ENCODE measurements at regions of chr1 and their contacts with region 1.

Region 1: DNA sequence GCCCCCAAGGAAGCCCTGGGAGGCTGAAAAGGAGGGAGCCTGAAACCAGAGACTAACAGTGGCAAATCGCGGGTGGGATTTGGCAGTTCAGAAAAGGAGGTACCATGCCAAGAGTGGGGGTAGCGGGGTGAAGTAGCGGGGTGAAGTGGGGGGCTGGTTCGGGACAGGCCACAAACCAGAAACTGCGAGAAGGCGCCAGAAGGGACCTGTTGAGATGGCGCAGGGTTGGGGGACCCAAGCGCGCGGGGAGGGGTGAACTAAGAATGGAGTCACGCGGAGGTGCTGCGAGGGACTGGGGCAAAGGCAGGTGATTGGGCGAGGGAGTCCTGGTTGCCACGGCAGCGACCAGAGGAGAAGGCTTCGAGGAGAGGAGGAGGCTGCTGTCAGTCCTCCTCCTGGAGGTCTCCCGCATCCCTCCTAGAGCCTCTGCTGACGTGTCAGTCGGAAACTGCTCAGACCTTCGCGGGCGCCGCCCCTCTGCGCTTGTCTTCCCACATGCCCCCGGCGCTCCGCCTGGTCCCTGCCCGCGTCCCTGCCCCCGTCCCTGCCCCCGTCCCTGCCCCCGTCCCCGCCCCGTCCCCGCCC is 438 bp upstream of the MIA3 start:
- DNase-seq: peak; percentile 98
- ATAC-seq: peak; percentile 95
- H3K4me3 ChIP-seq: peak overlapping the region; percentile 42
- H3K27ac ChIP-seq: peak overlapping the region; percentile 65
- H3K4me1 ChIP-seq: peaks cover 7% of the 10 kb centered on the region
- H3K27me3 ChIP-seq: no peaks in the 10 kb centered on the region
- CTCF ChIP-seq: no peak
- POLR2A ChIP-seq: peak; percentile 64
- RAD21 ChIP-seq: no peak

Region 2: GRCh38 chr1:222521299-222522104 is 96.0 kb before region 1 on chr1:
- CTCF ChIA-PET with region 1: no interaction called
- POLR2A ChIA-PET with region 1: no interaction called
- dilution Hi-C with region 1: no loop called
- in situ Hi-C with region 1: no loop called
- intact Hi-C with region 1: no loop called
- DNase-seq: peak; percentile 44
- ATAC-seq: peak; percentile 35; the same call in 1 of the 2 replicates
- H3K4me3 ChIP-seq: no peak overlapping the region
- H3K27ac ChIP-seq: no peak overlapping the region
- H3K4me1 ChIP-seq: no peaks in the 10 kb centered on the region
- H3K27me3 ChIP-seq: peaks cover 5% of the 10 kb centered on the region
- CTCF ChIP-seq: no peak
- POLR2A ChIP-seq: no peak
- RAD21 ChIP-seq: no peak

Region 3: DNA sequence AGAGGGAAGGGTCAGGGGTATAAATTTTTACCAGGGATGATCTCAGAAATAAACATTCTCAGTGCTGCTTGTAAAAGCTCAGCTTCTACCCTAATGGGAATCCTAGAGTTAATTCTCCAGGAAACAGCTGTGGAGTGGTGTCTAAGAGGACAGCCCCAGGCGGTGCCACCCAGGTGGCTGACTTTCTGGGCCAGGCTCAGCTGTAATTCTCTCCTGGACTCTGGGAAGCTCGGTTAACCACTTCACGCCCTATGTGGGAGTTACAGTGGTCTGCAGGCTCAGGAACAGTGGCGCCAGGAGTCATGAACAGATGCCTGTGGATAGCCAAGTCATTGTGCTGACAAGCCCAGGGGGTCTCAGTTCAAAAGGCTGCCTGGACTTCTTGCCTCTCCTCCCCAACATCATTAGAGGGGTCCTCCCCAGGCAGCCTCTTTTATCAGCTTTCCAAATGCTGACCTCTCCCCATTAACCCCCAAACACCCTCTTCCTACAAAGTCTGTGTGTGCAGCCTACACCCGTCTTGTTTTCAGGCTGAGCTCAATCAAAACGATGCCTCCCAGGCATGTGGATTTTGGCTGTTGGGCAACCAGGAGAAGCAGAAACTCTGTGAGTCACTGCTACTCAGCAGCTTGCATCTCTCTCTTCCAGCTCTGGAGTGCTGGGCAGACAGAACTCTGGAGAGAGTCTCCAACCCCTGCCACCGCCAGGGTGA is 70.8 kb before region 1 on chr1:
- CTCF ChIA-PET with region 1: no interaction called
- POLR2A ChIA-PET with region 1: no interaction called
- dilution Hi-C with region 1: no loop called
- in situ Hi-C with region 1: no loop called
- intact Hi-C with region 1: loop called (anchors 2 kb)
- DNase-seq: peak; percentile 83
- ATAC-seq: peak; percentile 95
- H3K4me3 ChIP-seq: no peak overlapping the region
- H3K27ac ChIP-seq: peak overlapping the region; percentile 27; the same call in 1 of the 2 replicates
- H3K4me1 ChIP-seq: peaks cover 5% of the 10 kb centered on the region; the same call in 1 of the 2 replicates
- H3K27me3 ChIP-seq: no peaks in the 10 kb centered on the region
- CTCF ChIP-seq: no peak
- POLR2A ChIP-seq: no peak
- RAD21 ChIP-seq: no peak

Region 4: GRCh38 chr1:222579316-222579715 is 38.1 kb before region 1 on chr1:
- CTCF ChIA-PET with region 1: no interaction called
- POLR2A ChIA-PET with region 1: no interaction called
- dilution Hi-C with region 1: no loop called
- in situ Hi-C with region 1: no loop called
- intact Hi-C with region 1: no loop called
- DNase-seq: no peak
- ATAC-seq: no peak
- H3K4me3 ChIP-seq: no peak overlapping the region
- H3K27ac ChIP-seq: no peak overlapping the region
- H3K4me1 ChIP-seq: no peaks in the 10 kb centered on the region; the same call in 1 of the 2 replicates
- H3K27me3 ChIP-seq: no peaks in the 10 kb centered on the region
- CTCF ChIP-seq: no peak
- POLR2A ChIP-seq: no peak
- RAD21 ChIP-seq: no peak

Region 5: GRCh38 chr1:222634180-222635013 is 16.9 kb after region 1 on chr1:
- CTCF ChIA-PET with region 1: no interaction called
- POLR2A ChIA-PET with region 1: no interaction called
- dilution Hi-C with region 1: no loop called
- in situ Hi-C with region 1: no loop called
- intact Hi-C with region 1: loop called (anchors 1 kb)
- DNase-seq: peak; percentile 90
- ATAC-seq: peak; percentile 82
- H3K4me3 ChIP-seq: no peak overlapping the region
- H3K27ac ChIP-seq: no peak overlapping the region
- H3K4me1 ChIP-seq: peaks cover 7% of the 10 kb centered on the region; the same call in 1 of the 2 replicates
- H3K27me3 ChIP-seq: no peaks in the 10 kb centered on the region
- CTCF ChIP-seq: peak; percentile 90
- POLR2A ChIP-seq: no peak
- RAD21 ChIP-seq: peak; percentile 83

Measured in IMR-90 (cell line).